ENCODE measurements at regions of chr1 and their contacts with region 1.

Region 1: GRCh38 chr1:58155418-58156123 is 391.0 kb downstream of the OMA1 start:
- DNase-seq: no peak
- ATAC-seq: peak; percentile 41
- H3K4me3 ChIP-seq: no peak overlapping the region
- H3K27ac ChIP-seq: no peak overlapping the region
- H3K4me1 ChIP-seq: peaks cover 3% of the 10 kb centered on the region; the same call in 1 of the 2 replicates
- H3K27me3 ChIP-seq: no peaks in the 10 kb centered on the region; a peak in 1 of 4 replicates
- CTCF ChIP-seq: peak; percentile 26 to 54 (median 52)
- EP300 ChIP-seq: no peak
- POLR2A ChIP-seq: no peak
- RAD21 ChIP-seq: peak; percentile 37; the same call in 1 of the 2 replicates

Region 2: DNA sequence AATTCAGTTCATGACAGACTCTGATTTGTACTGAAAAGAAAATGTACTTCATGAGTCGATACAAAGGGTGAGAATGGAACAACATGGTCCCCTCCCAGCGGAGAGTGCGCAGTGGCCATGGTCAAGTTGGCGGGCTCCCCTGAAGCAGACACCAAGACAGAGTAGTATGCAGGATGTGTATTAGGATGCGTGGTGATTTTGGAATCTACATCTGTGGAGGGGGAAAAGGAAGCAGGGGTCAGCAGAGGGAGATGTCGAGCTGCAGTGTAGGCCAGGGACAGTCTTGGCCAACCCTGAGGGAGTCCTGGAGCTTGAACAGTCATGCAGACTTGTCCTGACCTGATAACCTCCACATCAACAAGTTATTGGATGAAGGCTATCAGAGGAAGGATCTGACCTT is 90.1 kb before region 1 on chr1:
- CTCF ChIA-PET with region 1: interaction called, 55 read pairs
- POLR2A ChIA-PET with region 1: interaction called, 5 read pairs
- RAD21 ChIA-PET with region 1: interaction called, 61 read pairs
- SMC1A ChIA-PET with region 1: interaction called, 149 read pairs
- in situ Hi-C with region 1: no loop called
- intact Hi-C with region 1: loop called (anchors 2 kb)
- DNase-seq: no peak
- ATAC-seq: peak; percentile 76
- H3K4me3 ChIP-seq: no peak overlapping the region
- H3K27ac ChIP-seq: no peak overlapping the region
- H3K4me1 ChIP-seq: no peaks in the 10 kb centered on the region
- H3K27me3 ChIP-seq: peaks cover 0 to 3% of the 10 kb centered on the region in 2 experiments; a peak in 2 of 4 replicates
- CTCF ChIP-seq: peak; percentile 32 to 54 (median 37); a peak in 4 of 6 replicates
- EP300 ChIP-seq: no peak
- POLR2A ChIP-seq: no peak
- RAD21 ChIP-seq: peak; percentile 65

Region 3: GRCh38 chr1:58084266-58084665 is 71.3 kb before region 1 on chr1:
- CTCF ChIA-PET with region 1: interaction called, 5 read pairs
- POLR2A ChIA-PET with region 1: no interaction called
- RAD21 ChIA-PET with region 1: interaction called, 3 read pairs
- SMC1A ChIA-PET with region 1: interaction called, 28 read pairs
- in situ Hi-C with region 1: no loop called
- intact Hi-C with region 1: no loop called
- DNase-seq: no peak
- ATAC-seq: peak; percentile 66
- H3K4me3 ChIP-seq: no peak overlapping the region
- H3K27ac ChIP-seq: no peak overlapping the region
- H3K4me1 ChIP-seq: no peaks in the 10 kb centered on the region
- H3K27me3 ChIP-seq: no peaks in the 10 kb centered on the region; a peak in 1 of 4 replicates
- CTCF ChIP-seq: no peak
- EP300 ChIP-seq: no peak
- POLR2A ChIP-seq: no peak
- RAD21 ChIP-seq: no peak

Region 4: GRCh38 chr1:58104960-58105359 is 50.6 kb before region 1 on chr1:
- CTCF ChIA-PET with region 1: interaction called, 164 read pairs
- POLR2A ChIA-PET with region 1: interaction called, 64 read pairs
- RAD21 ChIA-PET with region 1: interaction called, 202 read pairs
- SMC1A ChIA-PET with region 1: interaction called, 258 read pairs
- in situ Hi-C with region 1: no loop called
- intact Hi-C with region 1: loop called (anchors 2 kb)
- DNase-seq: peak; percentile 68
- ATAC-seq: peak; percentile 80
- H3K4me3 ChIP-seq: no peak overlapping the region
- H3K27ac ChIP-seq: no peak overlapping the region
- H3K4me1 ChIP-seq: peaks cover 21% of the 10 kb centered on the region
- H3K27me3 ChIP-seq: no peaks in the 10 kb centered on the region
- CTCF ChIP-seq: no peak
- EP300 ChIP-seq: peak; percentile 90 to 97
- POLR2A ChIP-seq: no peak
- RAD21 ChIP-seq: no peak

Region 5: DNA sequence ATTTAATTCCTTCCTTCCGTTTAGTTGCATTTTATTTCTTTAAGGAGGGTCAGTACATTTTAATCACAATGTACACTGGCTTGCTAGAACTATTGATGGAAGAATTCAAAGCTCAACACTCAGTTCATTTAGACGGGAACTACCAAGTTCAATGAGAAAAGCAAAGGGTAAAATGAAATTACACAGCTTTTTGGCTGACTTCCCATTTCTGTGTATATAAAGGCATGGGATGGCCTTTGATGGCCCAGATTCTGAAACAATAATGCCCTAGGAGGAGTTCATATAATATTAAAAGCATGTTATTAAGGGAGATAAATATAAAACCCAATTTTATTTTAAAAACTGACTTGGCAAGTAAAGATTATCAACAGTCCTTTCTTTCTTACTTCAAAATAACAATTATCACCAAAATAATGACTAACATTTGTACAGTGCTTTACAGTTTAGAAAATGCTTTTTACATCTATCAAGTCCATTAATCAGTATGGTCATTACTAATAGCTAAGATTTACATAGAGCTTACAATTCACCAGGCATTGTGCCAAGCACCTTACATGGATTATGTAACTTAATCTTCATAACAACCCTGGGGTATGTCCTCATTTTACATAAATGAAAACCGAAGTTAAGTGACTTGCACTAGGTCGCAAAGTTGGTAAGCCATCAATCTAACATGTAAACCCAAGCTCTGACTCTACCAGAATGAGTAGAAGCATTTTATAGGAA is 11.4 kb before region 1 on chr1:
- CTCF ChIA-PET with region 1: interaction called, 19 read pairs
- POLR2A ChIA-PET with region 1: no interaction called
- RAD21 ChIA-PET with region 1: interaction called, 9 read pairs
- SMC1A ChIA-PET with region 1: interaction called, 34 read pairs
- in situ Hi-C with region 1: no loop called
- intact Hi-C with region 1: no loop called
- DNase-seq: no peak
- ATAC-seq: no peak
- H3K4me3 ChIP-seq: no peak overlapping the region
- H3K27ac ChIP-seq: no peak overlapping the region
- H3K4me1 ChIP-seq: no peaks in the 10 kb centered on the region
- H3K27me3 ChIP-seq: no peaks in the 10 kb centered on the region; a peak in 2 of 4 replicates
- CTCF ChIP-seq: no peak
- EP300 ChIP-seq: no peak
- POLR2A ChIP-seq: no peak
- RAD21 ChIP-seq: no peak

Measured in GM12878 (cell line).